PC-9 (cell line): ENCODE measurements at regions of chr11 and their contacts with region 1.

Region 1: GRCh38 chr11:33742249-33742851 is 6.1 kb upstream of the CD59 start:
- DNase-seq: peak in 1 of 2 experiments; percentile 48
- H3K4me3 ChIP-seq: no peak overlapping the region
- H3K27ac ChIP-seq: no peak overlapping the region
- H3K4me1 ChIP-seq: peaks cover 8% of the 10 kb centered on the region
- H3K27me3 ChIP-seq: no peaks in the 10 kb centered on the region
- CTCF ChIP-seq: peak; percentile 82

Region 2: DNA sequence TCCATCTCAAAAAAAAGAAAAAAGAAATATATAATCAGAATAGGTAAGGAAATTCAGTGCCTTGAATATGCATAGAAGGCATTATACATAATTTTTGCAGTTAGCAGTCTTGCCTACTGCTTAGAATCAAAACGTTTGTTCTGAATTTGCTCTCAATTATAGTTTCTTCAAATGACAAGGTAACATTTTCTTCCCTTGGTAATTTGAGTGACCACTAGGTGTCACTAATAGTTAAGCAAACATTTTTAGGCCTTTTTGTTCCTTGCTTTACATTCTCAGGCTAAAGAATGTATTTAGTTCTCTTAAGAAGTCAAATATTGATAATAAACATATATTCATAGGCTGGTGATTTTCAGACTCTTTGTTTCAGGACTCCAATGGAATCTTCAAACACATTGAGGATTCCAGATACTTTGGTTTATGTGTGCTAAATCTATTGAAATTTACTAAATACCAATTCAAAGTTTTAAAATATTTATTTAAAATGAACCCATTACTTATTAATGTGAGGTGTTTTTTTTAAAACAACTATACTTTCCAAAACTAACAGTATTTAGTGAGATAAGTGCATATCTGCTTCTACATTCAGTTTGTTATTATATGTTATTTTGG is 781.7 kb before region 1 on chr11:
- CTCF ChIA-PET with region 1: interaction called, 3 read pairs
- POLR2A ChIA-PET with region 1: no interaction called
- intact Hi-C with region 1: loop called (anchors 10 kb)
- DNase-seq: peak in 1 of 2 experiments; percentile 59
- H3K4me3 ChIP-seq: no peak overlapping the region
- H3K27ac ChIP-seq: no peak overlapping the region
- H3K4me1 ChIP-seq: no peaks in the 10 kb centered on the region
- H3K27me3 ChIP-seq: no peaks in the 10 kb centered on the region
- CTCF ChIP-seq: peak; percentile 90

Region 3: DNA sequence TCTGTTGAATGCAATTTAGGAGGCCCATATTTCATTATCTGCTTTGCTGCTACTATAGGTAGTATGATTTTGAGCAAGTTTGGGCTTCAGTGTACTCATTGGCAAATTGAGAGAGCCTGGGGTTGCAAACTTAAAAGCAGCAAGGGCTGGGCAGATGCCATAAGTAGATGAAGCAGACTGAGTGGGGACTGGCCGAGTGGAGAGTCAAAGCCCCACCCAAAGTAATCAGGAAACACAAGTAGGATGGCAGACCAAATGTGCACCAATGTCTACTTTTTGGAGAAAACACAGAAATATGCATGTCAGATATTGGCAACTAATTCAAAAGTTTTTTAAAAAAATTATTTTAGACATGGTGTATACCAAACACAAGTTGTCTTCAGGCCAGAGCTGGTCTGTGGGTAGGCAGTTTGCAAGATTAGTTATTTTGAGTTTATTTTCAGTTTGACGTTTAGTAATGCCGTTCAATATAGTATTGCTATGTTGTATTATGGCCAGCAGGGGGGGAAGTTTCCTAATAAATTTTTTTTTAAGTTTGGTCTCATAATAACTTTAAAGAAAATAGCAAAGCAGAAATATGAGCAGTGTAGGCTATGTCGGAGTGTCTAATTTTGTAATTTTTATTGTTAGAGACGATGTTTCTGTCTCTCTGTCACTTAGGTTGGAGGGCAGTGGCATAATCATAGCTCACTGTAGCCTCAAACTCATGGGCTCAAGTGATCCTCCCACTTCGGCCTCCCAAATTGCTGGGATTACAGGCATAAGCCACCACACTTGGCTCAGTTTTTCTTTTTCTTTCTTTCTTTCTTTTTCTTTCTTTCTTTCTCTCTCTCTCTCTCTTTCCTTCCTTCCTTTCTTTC is 380.1 kb before region 1 on chr11:
- CTCF ChIA-PET with region 1: interaction called, 18 read pairs
- POLR2A ChIA-PET with region 1: no interaction called
- intact Hi-C with region 1: loop called (anchors 1 kb)
- DNase-seq: peak in 1 of 2 experiments; percentile 54
- H3K4me3 ChIP-seq: no peak overlapping the region
- H3K27ac ChIP-seq: no peak overlapping the region
- H3K4me1 ChIP-seq: no peaks in the 10 kb centered on the region
- H3K27me3 ChIP-seq: no peaks in the 10 kb centered on the region
- CTCF ChIP-seq: peak; percentile 91

Region 4: DNA sequence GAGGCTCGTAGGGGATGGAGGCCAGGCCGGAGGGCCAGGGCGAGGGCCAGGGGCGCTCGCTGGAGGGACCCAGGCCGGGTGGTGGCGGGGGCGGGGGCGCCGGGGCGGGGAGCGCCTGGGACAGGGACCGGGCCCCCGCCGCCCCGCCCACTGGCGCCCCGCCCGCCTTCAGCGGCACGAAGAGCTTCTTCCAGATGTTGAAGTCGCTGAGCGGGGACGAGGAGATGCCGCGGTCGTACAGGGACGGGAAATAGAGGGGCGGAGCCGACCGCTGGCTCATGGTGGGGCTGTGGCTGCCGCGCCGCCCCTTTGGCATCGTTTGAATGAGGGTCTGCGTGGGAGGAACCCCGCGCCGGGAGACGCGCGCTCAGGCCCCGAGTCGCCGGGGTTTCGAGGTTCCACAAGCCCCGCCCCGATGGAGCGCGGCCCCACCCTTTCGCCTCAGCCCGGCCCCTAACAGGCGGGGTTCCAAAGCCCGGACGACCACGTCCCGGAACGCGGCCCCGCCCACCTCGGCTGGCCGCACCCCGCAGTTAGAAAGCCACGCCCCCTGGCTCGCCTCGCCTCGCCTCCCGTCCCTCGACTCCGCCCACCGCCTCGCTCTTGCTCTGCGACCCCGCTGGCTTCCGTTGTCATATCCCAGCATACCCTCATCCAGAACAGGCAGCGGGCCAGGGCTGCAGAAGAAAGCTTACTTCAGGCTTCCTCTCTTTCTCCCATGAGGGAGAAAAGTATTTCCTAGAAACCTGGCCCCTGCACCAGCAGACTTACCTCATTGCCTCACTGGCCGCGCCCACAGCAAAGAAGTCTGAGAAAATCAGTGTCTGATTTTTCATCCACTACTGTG is 41.7 kb before region 1 on chr11 and contains the start of gene C11orf91:
- CTCF ChIA-PET with region 1: interaction called, 10 read pairs
- POLR2A ChIA-PET with region 1: interaction called, 6 read pairs
- intact Hi-C with region 1: no loop called
- DNase-seq: peak; percentile 73 to 97
- H3K4me3 ChIP-seq: peak within 1 kb of the TSS; percentile 56
- H3K27ac ChIP-seq: peak within 1 kb of the TSS; percentile 68
- H3K4me1 ChIP-seq: peaks cover 68% of the 10 kb centered on the region
- H3K27me3 ChIP-seq: no peaks in the 10 kb centered on the region
- CTCF ChIP-seq: no peak
- total RNA-seq, gene C11orf91: 0.90 TPM in 1 of 2 replicates, not detected in the other

Region 5: GRCh38 chr11:33716236-33716635 is 26.1 kb before region 1 on chr11:
- CTCF ChIA-PET with region 1: interaction called, 42 read pairs
- POLR2A ChIA-PET with region 1: no interaction called
- intact Hi-C with region 1: loop called (anchors 2 kb)
- DNase-seq: peak in 1 of 2 experiments; percentile 69
- H3K4me3 ChIP-seq: no peak overlapping the region
- H3K27ac ChIP-seq: peak overlapping the region; percentile 11; the same call in 1 of the 2 replicates
- H3K4me1 ChIP-seq: peaks cover 11% of the 10 kb centered on the region
- H3K27me3 ChIP-seq: no peaks in the 10 kb centered on the region
- CTCF ChIP-seq: peak; percentile 47